PC-9 (cell line): ENCODE measurements at regions of chr5 and their contacts with region 1.

Region 1: DNA sequence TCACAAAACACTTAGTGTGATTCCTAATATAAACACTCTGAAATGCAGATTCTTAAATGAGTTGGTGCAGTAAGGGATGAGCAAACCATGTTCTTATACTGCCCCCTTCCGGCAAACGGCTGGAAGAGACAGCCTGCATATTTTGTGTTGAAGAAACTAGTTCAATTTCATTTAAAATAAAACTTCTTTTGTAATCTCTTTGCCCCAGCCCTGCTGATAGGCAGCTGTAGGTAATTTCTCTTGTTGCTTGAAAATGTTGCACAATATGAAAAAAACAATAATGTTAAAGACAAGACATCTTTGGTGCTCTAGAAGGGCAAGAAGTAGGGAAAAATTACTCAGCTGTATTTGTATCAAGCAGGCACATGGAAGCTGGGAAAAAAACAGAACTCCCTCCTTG is 89.7 kb upstream of the CCNG1 start:
- DNase-seq: peak in 1 of 2 experiments; percentile 37
- H3K4me3 ChIP-seq: no peak overlapping the region
- H3K27ac ChIP-seq: no peak overlapping the region
- H3K4me1 ChIP-seq: peaks cover 10% of the 10 kb centered on the region
- H3K27me3 ChIP-seq: no peaks in the 10 kb centered on the region
- CTCF ChIP-seq: peak; percentile 92

Region 2: DNA sequence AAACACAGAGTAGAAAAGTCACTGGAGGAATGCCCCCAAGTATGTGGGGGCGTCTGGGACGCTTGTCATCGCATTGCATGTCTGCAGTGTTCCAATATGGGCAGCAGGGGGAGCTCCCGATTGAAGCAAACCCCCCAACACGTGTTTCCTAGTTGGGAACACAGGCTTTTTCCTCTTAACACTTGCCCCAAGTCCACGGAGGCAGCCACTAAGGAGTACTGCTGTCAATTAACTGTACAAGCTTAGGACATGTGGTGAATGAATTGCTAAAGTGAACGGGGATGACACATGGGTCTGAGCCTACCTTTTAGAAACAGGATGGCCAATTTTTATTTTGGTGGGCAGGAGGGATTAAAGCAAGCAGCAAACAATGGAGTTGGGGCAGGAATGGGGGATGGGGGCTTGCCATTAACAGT is 1803.3 kb before region 1 on chr5:
- CTCF ChIA-PET with region 1: no interaction called
- POLR2A ChIA-PET with region 1: no interaction called
- intact Hi-C with region 1: loop called (anchors 5 kb)
- DNase-seq: peak in 1 of 2 experiments; percentile 16
- H3K4me3 ChIP-seq: no peak overlapping the region
- H3K27ac ChIP-seq: no peak overlapping the region
- H3K4me1 ChIP-seq: no peaks in the 10 kb centered on the region
- H3K27me3 ChIP-seq: no peaks in the 10 kb centered on the region
- CTCF ChIP-seq: peak; percentile 80

Region 3: DNA sequence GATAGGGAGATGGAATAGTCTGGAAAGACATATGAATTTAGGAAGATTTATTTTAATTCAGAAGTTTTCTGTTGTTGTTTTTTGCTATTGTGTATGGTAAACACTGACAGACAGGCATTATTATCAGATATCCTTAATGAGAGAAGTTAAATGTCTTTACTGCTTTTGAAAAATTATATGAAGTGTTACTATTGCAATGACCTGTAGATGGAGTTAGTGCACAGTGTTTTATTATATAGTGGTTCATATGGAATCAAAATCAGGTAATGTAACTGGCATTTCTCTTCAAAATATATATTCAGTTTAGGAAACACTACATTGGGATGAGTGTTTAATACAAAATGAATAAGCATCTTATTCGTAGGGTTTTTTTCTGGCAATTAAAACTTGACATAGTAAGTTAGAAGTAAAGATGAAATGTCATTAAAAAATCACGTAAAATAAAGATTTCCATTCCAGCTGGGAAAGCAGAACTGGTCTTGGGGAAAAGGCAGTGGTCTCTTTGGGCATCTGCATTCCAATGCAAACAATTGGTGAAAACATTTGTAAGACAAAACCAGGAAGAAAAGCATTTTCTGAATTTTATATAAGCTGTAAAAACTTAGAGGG is 1495.9 kb before region 1 on chr5:
- CTCF ChIA-PET with region 1: no interaction called
- POLR2A ChIA-PET with region 1: no interaction called
- intact Hi-C with region 1: loop called (anchors 10 kb)
- DNase-seq: no peak
- H3K4me3 ChIP-seq: no peak overlapping the region
- H3K27ac ChIP-seq: no peak overlapping the region
- H3K4me1 ChIP-seq: no peaks in the 10 kb centered on the region
- H3K27me3 ChIP-seq: no peaks in the 10 kb centered on the region
- CTCF ChIP-seq: peak; percentile 56

Region 4: DNA sequence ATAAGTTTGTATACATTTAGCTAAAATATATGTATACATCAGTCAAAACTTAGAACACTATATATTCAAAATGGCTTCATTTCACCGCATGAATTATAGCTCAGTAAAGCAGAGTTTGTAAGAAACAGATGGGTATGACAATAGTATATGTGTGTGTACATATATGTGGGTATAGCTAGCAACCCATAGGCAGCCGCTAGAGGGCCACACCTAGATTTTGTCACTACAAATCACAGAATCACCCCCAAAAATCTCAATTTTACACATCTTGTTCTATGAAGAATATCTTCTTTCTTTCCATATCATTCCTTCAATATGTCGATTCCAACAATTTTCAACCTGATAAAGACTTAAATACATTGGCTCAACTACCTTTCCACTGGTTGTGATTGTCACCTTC is 268.1 kb before region 1 on chr5:
- CTCF ChIA-PET with region 1: no interaction called
- POLR2A ChIA-PET with region 1: no interaction called
- intact Hi-C with region 1: loop called (anchors 2 kb)
- DNase-seq: no peak
- H3K4me3 ChIP-seq: no peak overlapping the region
- H3K27ac ChIP-seq: no peak overlapping the region
- H3K4me1 ChIP-seq: no peaks in the 10 kb centered on the region
- H3K27me3 ChIP-seq: no peaks in the 10 kb centered on the region
- CTCF ChIP-seq: peak; percentile 60; the same call in 1 of the 2 replicates

Region 5: GRCh38 chr5:163505368-163506094 is 157.9 kb after region 1 on chr5 and contains the start of gene MAT2B:
- CTCF ChIA-PET with region 1: no interaction called
- POLR2A ChIA-PET with region 1: no interaction called
- intact Hi-C with region 1: no loop called
- DNase-seq: peak; percentile 87 to 96
- H3K4me3 ChIP-seq: peak within 1 kb of the TSS; percentile 92
- H3K27ac ChIP-seq: peak within 1 kb of the TSS; percentile 72
- H3K4me1 ChIP-seq: peaks cover 29% of the 10 kb centered on the region
- H3K27me3 ChIP-seq: no peaks in the 10 kb centered on the region
- CTCF ChIP-seq: peak; percentile 56; the same call in 1 of the 2 replicates
- total RNA-seq, gene MAT2B: 46.3 and 66.2 TPM in 2 replicates